ENCODE measurements at regions of chr6 and their contacts with region 1.

Region 1: DNA sequence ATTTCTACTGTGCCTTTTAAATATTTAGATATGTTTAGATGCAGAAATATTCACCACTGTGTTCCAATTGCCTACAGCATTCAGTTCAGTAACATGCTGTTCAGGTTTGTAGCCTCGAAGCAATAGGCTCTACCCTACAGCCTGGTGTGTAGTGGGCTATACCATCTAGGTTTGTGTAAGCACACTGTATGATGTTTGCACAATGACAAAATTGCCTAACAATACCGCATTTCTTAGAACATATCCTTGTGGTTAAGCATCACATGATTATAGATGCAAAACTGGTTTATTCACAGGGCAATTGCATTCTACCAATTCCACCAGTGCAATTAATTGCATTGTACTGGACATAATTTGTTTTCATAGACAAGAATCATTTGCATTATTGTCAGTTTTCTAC is 7.9 kb upstream of the SLC22A16 start:
- DNase-seq: peak; percentile 84
- ATAC-seq: peak; percentile 84
- H3K4me3 ChIP-seq: no peak overlapping the region
- H3K27ac ChIP-seq: peak overlapping the region; percentile 71
- H3K4me1 ChIP-seq: peaks cover 17% of the 10 kb centered on the region
- H3K27me3 ChIP-seq: no peaks in the 10 kb centered on the region
- CTCF ChIP-seq: no peak

Region 2: DNA sequence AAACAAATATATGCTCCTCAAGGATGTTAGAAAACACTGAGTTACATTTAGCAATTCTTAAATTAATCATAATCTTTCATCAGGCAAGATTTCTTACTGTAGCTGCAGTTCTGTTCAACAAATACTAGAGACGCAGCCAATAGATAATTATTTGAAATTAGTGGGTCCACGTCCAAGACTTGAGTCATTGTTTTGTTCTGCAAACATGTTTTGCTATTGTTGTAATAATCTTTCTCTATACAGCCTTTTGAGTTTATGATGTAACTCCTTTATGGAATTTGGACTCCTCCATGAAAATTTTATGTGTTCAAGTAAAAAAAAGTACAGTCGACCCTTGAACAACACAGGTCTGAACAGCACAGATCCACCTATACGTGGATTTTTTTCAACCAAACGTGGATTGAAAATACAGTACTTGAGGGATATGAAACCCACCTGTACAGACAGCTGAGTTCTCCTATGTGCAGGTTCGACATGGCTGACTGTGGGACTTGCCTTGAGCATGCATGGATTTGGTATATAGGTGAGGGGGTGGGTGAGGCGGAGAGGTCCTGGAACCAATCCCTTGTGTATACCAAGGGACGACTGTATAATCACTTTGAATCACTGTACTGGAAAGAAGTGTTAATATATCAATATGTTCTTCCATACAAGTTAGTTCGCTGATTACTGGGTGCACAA is 33.4 kb after region 1 on chr6:
- CTCF ChIA-PET with region 1: no interaction called
- POLR2A ChIA-PET with region 1: no interaction called
- intact Hi-C with region 1: loop called (anchors 1 kb)
- DNase-seq: peak; percentile 46
- ATAC-seq: peak; percentile 72
- H3K4me3 ChIP-seq: peak overlapping the region; percentile 18; the same call in 1 of the 2 replicates
- H3K27ac ChIP-seq: peak overlapping the region; percentile 20
- H3K4me1 ChIP-seq: peaks cover 23% of the 10 kb centered on the region
- H3K27me3 ChIP-seq: no peaks in the 10 kb centered on the region
- CTCF ChIP-seq: no peak

Region 3: DNA sequence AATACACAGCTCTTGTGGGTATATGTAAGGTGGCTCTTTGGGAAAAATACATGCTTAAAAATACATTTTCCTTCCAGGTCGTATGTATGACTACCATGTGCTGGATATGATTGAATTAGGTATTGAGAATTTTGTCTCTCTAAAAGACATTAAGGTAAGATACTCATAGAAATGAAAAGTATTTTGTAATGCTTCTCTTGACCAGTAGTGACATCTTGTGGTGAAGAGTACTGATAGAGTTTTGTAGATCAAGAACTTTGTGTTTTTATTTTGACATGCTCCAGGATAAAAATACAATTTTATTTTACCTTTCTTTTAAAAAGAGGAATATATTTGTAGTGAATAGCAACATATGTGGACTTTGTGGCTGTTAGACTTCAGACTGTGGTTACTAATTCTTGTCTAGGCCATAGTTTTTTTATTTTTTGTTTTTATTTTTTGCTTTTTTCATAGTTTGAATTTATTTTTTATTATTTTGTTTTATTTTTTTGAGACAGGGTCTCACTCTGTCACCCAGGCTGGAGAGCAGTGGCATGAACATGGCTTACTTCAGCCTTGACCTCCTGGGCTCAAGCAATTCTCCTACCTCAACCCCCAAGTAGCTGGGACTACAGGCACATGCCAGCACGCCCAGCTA is 515.4 kb after region 1 on chr6:
- CTCF ChIA-PET with region 1: interaction called, 10 read pairs
- POLR2A ChIA-PET with region 1: no interaction called
- intact Hi-C with region 1: loop called (anchors 1 kb)
- DNase-seq: peak; percentile 61
- ATAC-seq: peak; percentile 50; the same call in 1 of the 2 replicates
- H3K4me3 ChIP-seq: no peak overlapping the region
- H3K27ac ChIP-seq: no peak overlapping the region
- H3K4me1 ChIP-seq: no peaks in the 10 kb centered on the region
- H3K27me3 ChIP-seq: no peaks in the 10 kb centered on the region
- CTCF ChIP-seq: peak; percentile 63

Measured in PC-3 (cell line).